Psoas muscle (tissue), 8 donors: ENCODE measurements at regions of chr21 and their contacts with region 1.

Region 1: DNA sequence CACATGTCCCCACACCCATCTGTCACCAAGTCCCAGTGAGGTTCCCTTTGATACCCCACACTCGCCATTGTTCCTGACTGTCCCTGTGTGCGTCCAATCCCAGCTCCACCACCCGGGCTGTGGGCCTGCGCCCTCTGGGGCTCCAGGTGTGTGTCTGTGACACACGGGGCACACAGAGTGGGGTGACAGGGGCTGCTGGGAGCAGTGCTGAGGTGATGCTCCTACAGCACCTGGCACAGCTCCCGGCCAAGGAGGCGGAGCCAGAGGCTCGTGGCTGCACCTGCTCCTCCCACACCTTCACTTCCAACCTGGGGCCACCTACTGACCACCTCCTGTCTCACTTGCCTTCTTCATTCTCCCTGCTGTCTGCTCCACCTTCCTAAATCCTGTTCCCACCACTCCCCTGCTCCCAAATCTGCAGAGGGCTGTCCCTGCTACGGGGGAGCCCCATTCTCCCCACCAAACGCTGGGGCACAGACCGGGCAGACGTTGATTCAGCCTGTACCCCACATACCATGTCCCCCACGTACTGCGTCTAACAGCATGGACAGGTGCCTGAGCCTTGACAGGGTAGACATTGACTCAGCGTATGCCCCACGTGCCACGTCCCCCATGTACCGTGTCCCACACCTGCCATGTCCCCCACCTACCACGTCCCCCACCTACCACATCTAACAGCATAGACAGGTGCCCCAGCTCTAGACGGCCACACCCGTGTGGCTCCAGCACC is 16.4 kb downstream of the WDR4 start:
- DNase-seq: no peak
- ATAC-seq: no peak
- H3K4me3 ChIP-seq: no peak overlapping the region
- H3K27ac ChIP-seq: no peak overlapping the region
- H3K4me1 ChIP-seq: no peaks in the 10 kb centered on the region
- H3K27me3 ChIP-seq: no peaks in the 10 kb centered on the region
- CTCF ChIP-seq: no peak

Region 2: DNA sequence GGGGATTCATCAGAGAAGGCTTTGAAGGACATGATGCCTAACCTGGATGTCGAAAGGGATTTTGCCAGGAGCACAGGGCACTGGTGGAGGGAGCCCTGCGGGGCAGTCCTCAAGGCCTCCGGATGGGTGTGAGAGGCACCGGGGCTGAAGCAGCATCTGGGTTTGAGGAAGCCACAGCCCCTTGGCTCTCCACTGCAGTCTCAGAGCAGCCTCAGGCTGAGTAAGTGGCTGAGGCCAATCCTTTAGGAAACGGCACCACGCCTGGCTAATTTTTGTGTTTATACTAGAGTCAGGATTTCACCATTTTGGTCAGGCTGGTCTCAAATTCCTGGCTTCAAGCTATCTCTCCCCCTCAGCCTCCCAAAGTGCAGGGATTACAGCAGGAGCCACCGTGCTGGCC is 50.5 kb after region 1 on chr21:
- intact Hi-C with region 1: loop called in 1 of 2 experiments (anchors 10 kb)
- DNase-seq: no peak
- ATAC-seq: peak in 3 of 4 donors; percentile 10 to 39 (median 27)
- H3K4me3 ChIP-seq: no peak overlapping the region
- H3K27ac ChIP-seq: no peak overlapping the region
- H3K4me1 ChIP-seq: no peaks in the 10 kb centered on the region
- H3K27me3 ChIP-seq: no peaks in the 10 kb centered on the region
- CTCF ChIP-seq: no peak